Activated CD4-positive, alpha-beta T cell treated with anti-CD3 and anti-CD28 coated beads, Interleukin-2, amount 10 ng/mL, durations not matched to agents 7 days and 5 days (primary cell): ENCODE measurements at regions of chr6 and their contacts with region 1.

Region 1: GRCh38 chr6:106125925-106126435 is 39.8 kb downstream of the PRDM1 start:
- DNase-seq: peak; percentile 44
- H3K4me3 Mint-ChIP-seq: peak overlapping the region; percentile 45
- H3K27ac Mint-ChIP-seq: peak overlapping the region; percentile 72
- H3K4me1 Mint-ChIP-seq: peaks cover 32% of the 10 kb centered on the region
- H3K27me3 Mint-ChIP-seq: peaks cover 9% of the 10 kb centered on the region

Region 2: DNA sequence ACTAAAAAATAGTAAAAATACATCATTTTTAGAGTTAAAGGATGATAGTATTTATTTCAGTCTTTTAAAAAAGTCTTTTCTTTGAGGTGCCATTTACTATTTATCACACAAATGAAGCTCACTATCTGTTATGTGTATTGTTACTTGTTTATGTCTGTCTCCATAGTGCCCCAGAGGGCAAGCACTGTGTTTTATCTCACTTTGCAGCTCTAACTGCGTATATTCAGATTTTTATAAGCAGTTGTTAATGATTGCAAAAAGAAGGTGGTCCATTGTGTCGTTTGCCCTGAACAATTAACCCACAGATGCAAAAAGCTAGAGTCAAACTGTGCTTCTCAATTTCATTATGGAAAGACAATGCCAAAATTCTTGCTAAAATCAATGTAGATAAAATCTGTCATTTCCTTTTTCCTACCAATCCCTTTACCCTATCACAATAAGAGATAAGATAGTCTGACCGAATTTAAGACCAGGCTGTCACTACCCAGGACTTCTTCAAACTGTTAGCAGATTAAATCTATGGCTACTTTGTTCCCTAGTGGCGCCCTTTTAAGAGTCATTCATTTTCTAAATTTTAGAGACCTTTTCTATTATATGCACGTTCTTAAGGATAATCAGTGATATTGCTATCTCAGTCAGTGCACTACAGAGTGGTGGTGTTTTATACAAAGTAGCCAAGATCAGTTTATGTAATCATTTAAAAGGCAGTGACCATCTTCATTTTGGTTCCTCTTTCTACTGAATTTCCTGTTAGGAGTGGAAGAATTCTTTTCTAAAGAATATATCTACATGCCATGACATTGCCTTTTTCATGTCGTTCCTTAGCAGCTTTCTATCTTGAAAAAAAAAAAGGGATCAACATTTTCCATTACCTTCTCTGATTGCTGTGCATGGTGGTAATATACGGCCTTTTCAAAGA is 172.9 kb before region 1 on chr6:
- CTCF ChIA-PET with region 1: no interaction called
- POLR2A ChIA-PET with region 1: no interaction called
- DNase-seq: no peak
- H3K4me3 Mint-ChIP-seq: no peak overlapping the region
- H3K27ac Mint-ChIP-seq: no peak overlapping the region
- H3K4me1 Mint-ChIP-seq: peaks cover 5% of the 10 kb centered on the region
- H3K27me3 Mint-ChIP-seq: no peaks in the 10 kb centered on the region

Region 3: DNA sequence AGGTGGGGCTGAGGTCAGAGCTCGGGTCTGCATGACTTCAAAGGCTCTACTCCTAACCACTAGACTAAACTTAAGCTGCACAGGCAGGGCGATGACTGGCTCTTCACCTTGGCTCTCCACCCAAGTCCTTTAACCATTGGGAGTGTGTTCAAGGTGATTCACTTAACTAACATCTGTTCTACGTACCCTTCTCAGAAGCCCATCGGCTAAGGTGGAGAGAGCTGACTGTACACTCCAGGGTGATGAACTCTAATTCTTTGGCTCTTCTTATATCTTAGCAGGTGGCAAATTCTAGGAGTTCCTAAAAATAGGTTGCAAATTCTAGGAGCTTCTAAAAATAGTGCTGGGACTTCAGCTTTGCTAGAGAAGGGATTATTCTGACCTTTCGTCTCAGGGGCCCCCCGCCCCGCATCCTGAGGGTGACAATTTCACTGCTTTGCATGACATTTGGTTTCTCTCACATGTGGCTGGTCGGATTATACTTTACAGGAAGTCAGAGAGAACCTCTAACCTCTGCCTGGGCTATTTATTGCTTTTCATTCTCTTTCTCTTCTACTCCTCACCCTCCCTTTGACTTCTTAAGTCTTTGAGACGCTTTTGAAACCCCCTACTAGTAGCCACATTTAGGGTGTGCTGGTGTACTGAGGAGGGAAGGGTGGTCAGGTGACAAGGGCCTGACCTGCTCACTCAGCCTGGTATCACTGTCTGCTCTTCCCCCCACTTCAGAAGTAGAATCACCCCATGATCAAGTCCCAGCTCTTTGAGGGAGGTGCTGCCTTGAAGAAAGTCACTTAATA is 15.7 kb after region 1 on chr6:
- CTCF ChIA-PET with region 1: interaction called, 13 read pairs
- POLR2A ChIA-PET with region 1: no interaction called
- DNase-seq: peak; percentile 59
- H3K4me3 Mint-ChIP-seq: peak overlapping the region; percentile 61
- H3K27ac Mint-ChIP-seq: peak overlapping the region; percentile 95
- H3K4me1 Mint-ChIP-seq: peaks cover 60% of the 10 kb centered on the region
- H3K27me3 Mint-ChIP-seq: no peaks in the 10 kb centered on the region

Region 4: DNA sequence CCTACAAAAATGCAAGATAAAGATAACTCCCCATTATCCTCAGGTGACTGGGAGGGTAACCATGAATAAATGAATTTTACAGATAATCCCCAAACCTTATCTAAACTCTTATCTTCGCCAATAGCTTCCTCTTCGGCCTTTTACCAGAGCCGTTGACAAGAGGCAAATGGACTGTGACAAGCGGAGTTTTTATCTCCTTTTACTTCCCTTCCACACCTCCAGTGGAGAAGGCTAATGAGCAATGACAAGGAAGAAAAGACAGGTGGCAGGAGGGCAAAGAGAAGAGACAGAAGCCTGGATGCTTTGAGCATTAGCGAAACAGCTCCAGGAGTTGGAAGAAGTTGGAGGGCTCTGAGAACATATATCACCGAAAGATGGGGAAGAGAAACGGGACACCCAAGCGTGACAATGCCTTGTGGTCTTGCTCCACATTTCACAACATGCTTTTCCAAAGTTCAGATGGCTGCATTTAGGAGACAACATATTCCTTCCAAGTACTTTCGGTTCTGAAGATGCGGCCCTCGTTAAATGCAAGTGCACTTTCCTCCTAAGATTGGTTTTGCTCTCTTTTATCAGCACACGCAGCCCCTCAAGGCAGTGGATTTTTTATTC is 29.3 kb after region 1 on chr6:
- CTCF ChIA-PET with region 1: no interaction called
- POLR2A ChIA-PET with region 1: no interaction called
- DNase-seq: no peak
- H3K4me3 Mint-ChIP-seq: no peak overlapping the region
- H3K27ac Mint-ChIP-seq: no peak overlapping the region
- H3K4me1 Mint-ChIP-seq: peaks cover 2% of the 10 kb centered on the region
- H3K27me3 Mint-ChIP-seq: peaks cover 4% of the 10 kb centered on the region